Mucosa of descending colon (tissue), 3 donors: ENCODE measurements at regions of chr19 and their contacts with region 1.

Region 1: DNA sequence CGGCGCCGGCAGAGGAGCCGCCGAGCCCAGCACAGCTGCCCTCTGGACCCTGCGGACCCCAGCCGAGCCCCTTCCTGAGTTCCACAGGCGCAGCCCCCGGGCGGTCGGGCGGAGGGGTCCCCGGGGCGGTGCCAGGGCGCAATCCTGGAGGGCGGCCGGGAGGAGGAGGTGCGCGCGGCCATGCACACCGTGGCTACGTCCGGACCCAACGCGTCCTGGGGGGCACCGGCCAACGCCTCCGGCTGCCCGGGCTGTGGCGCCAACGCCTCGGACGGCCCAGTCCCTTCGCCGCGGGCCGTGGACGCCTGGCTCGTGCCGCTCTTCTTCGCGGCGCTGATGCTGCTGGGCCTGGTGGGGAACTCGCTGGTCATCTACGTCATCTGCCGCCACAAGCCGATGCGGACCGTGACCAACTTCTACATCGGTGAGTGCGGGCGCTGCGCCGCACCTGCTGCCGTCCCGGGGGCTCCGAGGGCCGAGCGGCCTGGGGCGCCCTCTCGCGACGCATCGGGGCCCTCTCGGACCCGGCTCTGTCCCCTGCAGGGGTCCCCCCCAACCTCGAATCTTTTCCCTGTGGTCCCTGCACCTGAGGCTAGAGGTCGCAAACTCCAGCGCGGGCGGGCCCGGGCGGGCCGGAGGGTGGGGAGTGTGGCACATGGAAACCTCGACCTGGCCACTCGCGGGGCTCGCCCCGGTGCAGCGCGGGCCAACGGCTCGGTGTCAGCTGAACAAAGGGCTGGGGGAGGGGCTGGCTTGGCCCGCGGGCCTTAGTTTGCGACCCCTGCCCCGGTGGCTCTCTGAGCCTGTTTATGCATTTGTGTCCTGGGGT is at the start of gene KISS1R:
- DNase-seq: peak; percentile 45 to 74 (median 54)
- ATAC-seq: peak; percentile 20
- H3K4me3 ChIP-seq: no peak within 1 kb of the TSS
- H3K4me1 ChIP-seq: peaks cover 43% of the 10 kb centered on the region
- CTCF ChIP-seq: no peak
- total RNA-seq, gene KISS1R: not detected

Region 2: DNA sequence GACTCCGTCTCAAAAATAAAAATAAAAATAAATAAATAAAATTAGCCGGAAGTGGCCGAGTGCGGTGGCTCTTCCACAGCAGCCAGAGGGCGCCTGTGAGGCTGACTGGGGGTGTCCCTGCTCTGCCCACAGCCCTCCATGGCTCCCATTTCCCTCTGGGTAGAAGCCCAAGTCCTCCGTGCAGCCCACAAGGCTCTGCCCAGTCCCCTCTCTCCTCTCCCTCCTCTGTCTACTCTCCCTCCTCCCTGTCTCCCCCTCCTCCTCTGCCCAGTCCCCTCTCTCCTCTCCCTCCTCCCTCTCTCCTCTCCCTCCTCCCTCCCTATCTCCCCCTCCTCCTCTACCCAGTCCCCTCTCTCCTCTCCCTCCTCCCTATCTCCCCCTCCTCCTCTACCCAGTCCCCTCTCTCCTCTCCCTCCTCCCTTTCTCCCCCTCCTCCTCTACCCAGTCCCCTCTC is 146.2 kb before region 1 on chr19:
- intact Hi-C with region 1: loop called in 1 of 2 experiments (anchors 5 kb)
- DNase-seq: peak in 1 of 3 donors; percentile 49
- ATAC-seq: peak; percentile 21
- H3K4me3 ChIP-seq: no peak overlapping the region
- H3K4me1 ChIP-seq: no peaks in the 10 kb centered on the region
- CTCF ChIP-seq: peak; percentile 18

Region 3: DNA sequence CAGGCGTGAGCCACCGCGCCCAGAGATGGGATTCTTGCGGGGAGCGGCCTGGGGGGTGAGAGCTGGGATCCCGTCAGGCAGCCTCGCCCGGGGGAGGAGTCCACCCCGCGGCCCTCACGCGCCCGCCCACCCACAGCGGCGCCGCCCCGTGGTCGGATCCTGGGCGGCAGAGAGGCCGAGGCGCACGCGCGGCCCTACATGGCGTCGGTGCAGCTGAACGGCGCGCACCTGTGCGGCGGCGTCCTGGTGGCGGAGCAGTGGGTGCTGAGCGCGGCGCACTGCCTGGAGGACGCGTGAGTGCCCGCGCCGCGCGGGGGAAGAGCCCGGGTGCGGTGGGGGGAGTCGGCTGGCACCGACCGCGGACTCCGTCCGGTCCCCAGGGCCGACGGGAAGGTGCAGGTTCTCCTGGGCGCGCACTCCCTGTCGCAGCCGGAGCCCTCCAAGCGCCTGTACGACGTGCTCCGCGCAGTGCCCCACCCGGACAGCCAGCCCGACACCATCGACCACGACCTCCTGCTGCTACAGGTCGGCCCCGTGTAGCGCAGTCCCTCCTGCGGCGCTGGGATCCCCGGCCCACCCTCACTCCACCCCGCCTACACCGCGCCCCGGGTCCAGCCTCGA is 56.9 kb before region 1 on chr19:
- intact Hi-C with region 1: loop called (anchors 5 to 10 kb)
- DNase-seq: peak; percentile 80 to 87 (median 85)
- ATAC-seq: peak; percentile 63
- H3K4me3 ChIP-seq: no peak overlapping the region
- H3K4me1 ChIP-seq: peaks cover 10% of the 10 kb centered on the region
- CTCF ChIP-seq: no peak